ENCODE measurements at regions of chr21 and their contacts with region 1.

Region 1: DNA sequence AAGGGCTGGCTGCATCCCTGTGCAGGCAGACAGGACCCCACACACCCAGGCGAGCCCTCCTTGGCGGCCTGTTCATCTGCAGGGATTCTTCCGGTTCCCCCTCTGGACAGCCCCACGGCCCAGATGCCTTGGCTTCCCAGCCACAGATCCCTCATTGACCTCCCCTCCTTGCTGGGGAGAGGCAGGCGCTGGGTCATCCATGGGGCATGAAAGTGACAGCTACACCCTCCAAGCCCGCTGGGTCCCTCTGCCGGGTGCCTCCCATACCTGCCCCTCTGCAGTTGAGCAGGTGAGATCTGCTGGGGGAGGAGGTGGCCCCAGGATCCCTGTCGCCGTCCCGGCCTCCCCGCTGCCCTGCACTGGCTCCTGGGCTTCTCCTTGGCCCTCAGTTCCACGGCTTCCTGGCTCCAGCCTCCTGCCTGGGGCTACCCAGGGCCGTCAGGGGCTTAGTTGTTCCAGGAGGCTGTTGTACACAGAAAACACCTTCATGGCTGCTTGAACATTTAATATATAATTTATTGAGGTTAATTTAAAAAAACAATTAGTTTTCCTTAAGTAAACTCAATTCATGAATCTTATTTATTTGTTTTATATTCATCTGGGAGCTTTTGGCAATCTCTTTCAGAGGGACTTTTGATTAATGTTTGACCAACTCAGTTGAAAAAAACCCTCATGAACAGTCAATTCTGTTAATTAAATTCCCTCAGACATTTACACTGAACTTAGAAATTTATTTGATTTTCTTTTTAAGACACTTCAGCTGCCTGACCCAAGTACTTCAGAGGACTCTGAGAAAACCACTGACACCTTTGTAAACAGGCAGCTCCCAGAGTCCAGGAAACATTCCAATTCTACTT is 67.6 kb upstream of the ABCG1 start:
- DNase-seq: no peak
- ATAC-seq: no peak

Region 2: GRCh38 chr21:42440187-42440792 is 289.0 kb after region 1 on chr21:
- intact Hi-C with region 1: loop called in 1 of 2 experiments (anchors 5 kb)
- DNase-seq: no peak
- ATAC-seq: no peak